Heart right ventricle (tissue), 16 donors: ENCODE measurements at regions of chr5 and their contacts with region 1.

Region 1: GRCh38 chr5:73298772-73299630 is 126.0 kb downstream of the TMEM174 start:
- DNase-seq: no peak
- ATAC-seq: peak in 1 of 8 donors; percentile 41
- H3K4me3 ChIP-seq: peak overlapping the region in 2 of 10 donors; percentile 10 to 12
- H3K27ac ChIP-seq: no peak overlapping the region
- H3K4me1 ChIP-seq: peaks cover 5 to 31% (median 22%) of the 10 kb centered on the region in 9 donors
- H3K27me3 ChIP-seq: peaks cover 41 to 100% (median 97%) of the 10 kb centered on the region in 7 donors
- CTCF ChIP-seq: peak in 1 of 9 donors; percentile 18

Region 2: GRCh38 chr5:73437101-73437776 is 138.2 kb after region 1 on chr5:
- intact Hi-C with region 1: loop called in 2 of 10 experiments (anchors 10 kb)
- DNase-seq: peak in 1 of 2 donors; percentile 21
- ATAC-seq: peak in 3 of 8 donors; percentile 29 to 60 (median 42)
- H3K4me3 ChIP-seq: peak overlapping the region in 9 of 10 donors; percentile 5 to 32 (median 16)
- H3K27ac ChIP-seq: no peak overlapping the region
- H3K4me1 ChIP-seq: peaks cover 0 to 19% (median 14%) of the 10 kb centered on the region in 9 donors
- H3K27me3 ChIP-seq: peaks cover 37 to 100% (median 99%) of the 10 kb centered on the region in 7 donors
- CTCF ChIP-seq: no peak

Region 3: GRCh38 chr5:73448463-73449136 is 149.6 kb after region 1 on chr5 and contains the start of gene FOXD1:
- intact Hi-C with region 1: loop called in 2 of 10 experiments (anchors 5 to 10 kb)
- DNase-seq: peak; percentile 45 to 59
- ATAC-seq: peak; percentile 72 to 89 (median 79)
- H3K4me3 ChIP-seq: peak within 1 kb of the TSS; percentile 23 to 64 (median 46)
- H3K27ac ChIP-seq: peak within 1 kb of the TSS in 1 of 10 donors; percentile 50
- H3K4me1 ChIP-seq: peaks cover 7 to 47% (median 19%) of the 10 kb centered on the region in 9 donors
- H3K27me3 ChIP-seq: peaks cover 63 to 94% (median 92%) of the 10 kb centered on the region in 7 donors
- CTCF ChIP-seq: peak in 1 of 9 donors; percentile 5
- total RNA-seq, gene FOXD1: 0.10 to 0.15 (median 0.13) TPM in 4 of 10 donors, not detected in the others